ENCODE measurements at regions of chr15 and their contacts with region 1.

Region 1: GRCh38 chr15:26831951-26832350 is 34.9 kb upstream of the GABRA5 start:
- DNase-seq: no peak
- ATAC-seq: no peak

Region 2: DNA sequence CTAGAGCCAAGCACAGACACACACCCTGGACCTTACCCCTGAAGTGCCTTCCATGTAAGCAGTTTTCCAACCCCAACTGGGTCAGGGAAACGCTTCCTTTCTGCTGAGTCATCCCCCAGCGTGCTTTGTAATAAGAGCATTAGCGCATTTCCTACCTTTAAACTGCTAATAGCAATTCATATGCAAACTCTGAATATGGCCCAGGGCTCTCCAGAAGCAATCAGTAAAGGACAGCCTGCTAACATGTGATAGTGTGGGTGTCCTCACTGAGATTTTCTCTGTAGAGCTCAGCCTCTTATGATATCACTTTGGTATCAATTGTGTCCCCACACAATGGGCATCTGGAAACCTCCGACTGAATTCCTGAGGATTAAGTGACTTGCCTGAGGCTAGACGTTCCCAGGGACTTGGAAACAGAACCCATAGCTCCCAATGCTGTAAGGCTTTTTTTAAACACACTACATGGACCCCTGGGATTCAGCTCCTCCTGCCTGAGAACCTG is 64.7 kb before region 1 on chr15:
- intact Hi-C with region 1: loop called in 1 of 2 experiments (anchors 10 kb)
- DNase-seq: no peak
- ATAC-seq: no peak

Measured in left colon (tissue), 2 donors.